ENCODE measurements at regions of chr11 and their contacts with region 1.

Region 1: GRCh38 chr11:9613118-9613829 is 39.8 kb downstream of the WEE1 start:
- DNase-seq: peak; percentile 90
- ATAC-seq: peak; percentile 31
- H3K4me3 ChIP-seq: peak overlapping the region; percentile 48 to 75 (median 66)
- H3K4me3 Mint-ChIP-seq: peak overlapping the region; percentile 98
- H3K27ac ChIP-seq: peak overlapping the region; percentile 98
- H3K27ac Mint-ChIP-seq: peak overlapping the region; percentile 99
- H3K4me1 ChIP-seq: peaks cover 66 to 78% of the 10 kb centered on the region in 2 donors
- H3K4me1 Mint-ChIP-seq: peaks cover 72% of the 10 kb centered on the region
- H3K27me3 ChIP-seq: no peaks in the 10 kb centered on the region
- H3K27me3 Mint-ChIP-seq: no peaks in the 10 kb centered on the region
- CTCF ChIP-seq: peak; percentile 92

Region 2: DNA sequence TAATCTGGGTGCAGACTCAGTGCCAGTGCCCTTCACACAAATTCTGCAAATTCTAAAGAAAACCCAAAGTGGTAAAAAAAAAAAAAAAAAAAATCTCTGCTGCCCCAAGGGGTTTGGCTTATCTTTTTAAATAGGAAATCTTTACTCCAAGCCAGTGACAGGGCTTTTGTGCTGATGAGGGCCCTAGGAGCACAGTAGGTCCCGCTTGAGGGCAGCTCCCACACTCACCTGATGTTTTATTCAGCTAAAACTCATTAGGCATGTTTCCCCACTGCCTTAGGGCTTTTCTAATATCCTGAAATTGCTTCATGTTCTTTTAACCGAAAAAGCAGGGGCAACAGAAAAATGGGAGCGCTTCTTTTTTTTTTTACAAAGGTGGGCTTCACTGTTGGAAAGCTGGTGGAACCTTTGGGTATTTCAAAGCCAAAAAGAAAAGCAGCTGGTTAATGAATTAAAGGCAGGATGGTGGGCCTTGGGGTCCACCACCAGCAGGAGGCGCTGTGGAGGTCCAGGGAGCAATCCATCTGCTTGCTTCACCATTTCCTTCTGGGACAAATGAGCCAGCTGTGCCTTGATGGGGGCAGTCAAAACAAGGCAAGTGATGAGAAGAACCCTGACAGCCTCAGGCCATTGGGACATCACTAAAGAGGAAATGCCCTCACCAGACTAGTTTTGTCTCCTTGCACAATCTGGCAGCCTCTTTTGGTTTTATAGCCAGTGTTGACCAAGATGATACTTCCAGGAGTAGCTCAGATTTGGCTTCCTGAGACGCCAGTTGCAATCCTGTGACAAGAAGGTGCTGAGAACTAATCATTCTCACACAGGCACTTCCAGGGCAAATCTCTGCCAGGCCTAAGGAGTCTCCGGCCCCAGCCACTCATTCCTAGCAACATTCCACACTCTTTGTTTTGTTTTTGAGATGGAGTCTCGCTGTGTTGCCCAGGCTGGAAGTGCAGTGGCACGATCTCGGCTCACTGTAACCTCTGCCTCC is 78.2 kb before region 1 on chr11:
- CTCF ChIA-PET with region 1: interaction called, 149 read pairs
- POLR2A ChIA-PET with region 1: interaction called, 5 read pairs
- intact Hi-C with region 1: loop called (anchors 1 kb)
- DNase-seq: peak; percentile 83
- ATAC-seq: peak; percentile 53
- H3K4me3 ChIP-seq: no peak overlapping the region
- H3K4me3 Mint-ChIP-seq: no peak overlapping the region
- H3K27ac ChIP-seq: no peak overlapping the region
- H3K27ac Mint-ChIP-seq: no peak overlapping the region
- H3K4me1 ChIP-seq: peaks cover 0 to 10% of the 10 kb centered on the region in 2 donors
- H3K4me1 Mint-ChIP-seq: peaks cover 2% of the 10 kb centered on the region
- H3K27me3 ChIP-seq: no peaks in the 10 kb centered on the region
- H3K27me3 Mint-ChIP-seq: no peaks in the 10 kb centered on the region
- CTCF ChIP-seq: peak; percentile 93

Region 3: GRCh38 chr11:9643751-9644150 is 30.5 kb after region 1 on chr11:
- CTCF ChIA-PET with region 1: interaction called, 4 read pairs
- POLR2A ChIA-PET with region 1: interaction called, 4 read pairs
- intact Hi-C with region 1: loop called (anchors 2 kb)
- DNase-seq: no peak
- ATAC-seq: no peak
- H3K4me3 ChIP-seq: no peak overlapping the region
- H3K4me3 Mint-ChIP-seq: no peak overlapping the region
- H3K27ac ChIP-seq: no peak overlapping the region
- H3K27ac Mint-ChIP-seq: peak overlapping the region; percentile 16
- H3K4me1 ChIP-seq: peaks cover 38 to 47% of the 10 kb centered on the region in 2 donors
- H3K4me1 Mint-ChIP-seq: peaks cover 60% of the 10 kb centered on the region
- H3K27me3 ChIP-seq: no peaks in the 10 kb centered on the region
- H3K27me3 Mint-ChIP-seq: no peaks in the 10 kb centered on the region
- CTCF ChIP-seq: no peak

Region 4: GRCh38 chr11:9672288-9672916 is 59.1 kb after region 1 on chr11:
- CTCF ChIA-PET with region 1: interaction called, 43 read pairs
- POLR2A ChIA-PET with region 1: interaction called, 4 read pairs
- intact Hi-C with region 1: no loop called
- DNase-seq: no peak
- ATAC-seq: no peak
- H3K4me3 ChIP-seq: peak overlapping the region in 1 of 5 experiments; percentile 33
- H3K4me3 Mint-ChIP-seq: peak overlapping the region; percentile 81
- H3K27ac ChIP-seq: peak overlapping the region; percentile 44 to 68
- H3K27ac Mint-ChIP-seq: no peak overlapping the region
- H3K4me1 ChIP-seq: peaks cover 72 to 80% of the 10 kb centered on the region in 2 donors
- H3K4me1 Mint-ChIP-seq: peaks cover 61% of the 10 kb centered on the region
- H3K27me3 ChIP-seq: no peaks in the 10 kb centered on the region
- H3K27me3 Mint-ChIP-seq: no peaks in the 10 kb centered on the region
- CTCF ChIP-seq: no peak

Region 5: DNA sequence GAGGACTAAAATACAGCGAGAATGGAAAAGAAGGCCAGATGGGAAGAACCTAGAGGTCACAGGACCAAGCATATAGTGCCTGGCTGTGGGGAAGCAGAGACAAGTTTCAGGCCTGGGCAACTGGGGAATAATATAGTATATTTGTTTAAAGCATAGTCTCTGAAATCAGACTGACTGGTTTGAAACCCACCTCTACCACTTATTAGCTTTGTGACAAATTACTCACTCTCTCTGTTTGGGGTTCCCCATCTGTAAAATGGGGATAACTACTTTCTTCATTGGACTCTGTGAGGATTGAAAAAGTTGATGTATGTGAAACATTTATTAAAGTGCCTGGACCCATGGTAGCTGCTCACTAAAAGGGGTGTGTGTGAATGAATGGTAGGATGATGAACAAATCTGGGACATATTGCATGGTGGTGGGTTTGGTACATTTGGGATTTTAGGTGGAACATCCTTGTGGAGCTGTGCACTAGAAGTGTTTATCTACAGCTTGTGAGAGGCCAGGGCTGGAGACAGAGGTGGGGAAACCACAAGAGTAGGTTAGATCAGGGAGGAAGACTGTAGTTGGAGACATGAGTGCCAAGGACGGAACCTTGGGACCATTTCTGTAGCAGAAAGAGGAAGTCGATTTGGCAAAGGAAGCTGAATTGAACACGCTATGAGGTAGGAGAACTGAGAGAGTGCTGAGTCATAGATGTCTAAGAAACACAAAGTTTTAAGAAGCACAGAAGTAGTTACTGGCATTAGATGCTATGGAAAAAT is 103.2 kb after region 1 on chr11:
- CTCF ChIA-PET with region 1: interaction called, 29 read pairs
- POLR2A ChIA-PET with region 1: interaction called, 6 read pairs
- intact Hi-C with region 1: loop called (anchors 1 kb)
- DNase-seq: peak; percentile 79
- ATAC-seq: peak; percentile 69
- H3K4me3 ChIP-seq: no peak overlapping the region
- H3K4me3 Mint-ChIP-seq: peak overlapping the region; percentile 58
- H3K27ac ChIP-seq: peak overlapping the region; percentile 60 to 66
- H3K27ac Mint-ChIP-seq: peak overlapping the region; percentile 90
- H3K4me1 ChIP-seq: peaks cover 82 to 91% of the 10 kb centered on the region in 2 donors
- H3K4me1 Mint-ChIP-seq: peaks cover 77% of the 10 kb centered on the region
- H3K27me3 ChIP-seq: no peaks in the 10 kb centered on the region
- H3K27me3 Mint-ChIP-seq: no peaks in the 10 kb centered on the region
- CTCF ChIP-seq: no peak

Region 6: DNA sequence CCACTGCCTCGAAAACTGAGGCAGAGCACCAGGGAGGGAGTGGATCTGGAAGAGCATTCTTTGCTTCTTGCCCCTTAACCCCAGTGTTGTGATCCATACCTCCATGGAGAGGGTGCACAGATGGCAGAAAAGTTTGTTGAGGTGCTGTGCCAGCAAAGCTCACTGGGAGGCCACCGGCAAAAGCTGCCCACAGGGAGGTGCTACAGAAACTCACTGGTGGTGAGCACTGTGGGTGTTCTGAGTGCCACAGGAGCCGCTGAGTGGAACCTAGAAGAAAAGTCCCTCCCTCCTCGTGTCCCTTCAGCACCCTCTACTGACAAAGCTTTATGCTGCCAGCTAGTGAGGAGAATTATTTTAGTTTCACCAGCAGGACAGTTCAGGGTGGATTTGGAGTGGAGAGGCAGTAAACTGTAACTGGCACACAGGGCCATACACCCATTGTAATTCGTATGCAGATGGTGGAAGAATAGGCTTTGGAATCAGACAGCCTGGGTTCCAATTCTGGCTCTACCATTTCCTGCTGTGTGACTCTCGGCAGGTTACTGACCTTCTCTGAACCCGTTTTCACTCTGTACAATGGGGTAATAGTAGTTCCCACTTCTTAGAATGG is 135.2 kb after region 1 on chr11:
- CTCF ChIA-PET with region 1: interaction called, 226 read pairs
- POLR2A ChIA-PET with region 1: interaction called, 38 read pairs
- intact Hi-C with region 1: loop called (anchors 1 kb)
- DNase-seq: peak; percentile 88
- ATAC-seq: peak; percentile 77
- H3K4me3 ChIP-seq: peak overlapping the region in 3 of 5 experiments; percentile 4 to 30 (median 22)
- H3K4me3 Mint-ChIP-seq: peak overlapping the region; percentile 66
- H3K27ac ChIP-seq: peak overlapping the region; percentile 40 to 86
- H3K27ac Mint-ChIP-seq: peak overlapping the region; percentile 78
- H3K4me1 ChIP-seq: peaks cover 48 to 49% of the 10 kb centered on the region in 2 donors
- H3K4me1 Mint-ChIP-seq: peaks cover 60% of the 10 kb centered on the region
- H3K27me3 ChIP-seq: no peaks in the 10 kb centered on the region
- H3K27me3 Mint-ChIP-seq: no peaks in the 10 kb centered on the region
- CTCF ChIP-seq: peak; percentile 83

Region 7: GRCh38 chr11:9838961-9839360 is 225.7 kb after region 1 on chr11:
- CTCF ChIA-PET with region 1: no interaction called
- POLR2A ChIA-PET with region 1: no interaction called
- intact Hi-C with region 1: no loop called
- DNase-seq: no peak
- ATAC-seq: no peak
- H3K4me3 ChIP-seq: no peak overlapping the region
- H3K4me3 Mint-ChIP-seq: no peak overlapping the region
- H3K27ac ChIP-seq: no peak overlapping the region
- H3K27ac Mint-ChIP-seq: no peak overlapping the region
- H3K4me1 ChIP-seq: peaks cover 0 to 6% of the 10 kb centered on the region in 2 donors
- H3K4me1 Mint-ChIP-seq: peaks cover 14% of the 10 kb centered on the region
- H3K27me3 ChIP-seq: no peaks in the 10 kb centered on the region
- H3K27me3 Mint-ChIP-seq: no peaks in the 10 kb centered on the region
- CTCF ChIP-seq: no peak

Region 8: GRCh38 chr11:9962722-9963121 is 349.4 kb after region 1 on chr11:
- CTCF ChIA-PET with region 1: no interaction called
- POLR2A ChIA-PET with region 1: no interaction called
- intact Hi-C with region 1: no loop called
- DNase-seq: peak; percentile 34
- ATAC-seq: peak; percentile 64
- H3K4me3 ChIP-seq: peak overlapping the region in 1 of 5 experiments; percentile 20
- H3K4me3 Mint-ChIP-seq: peak overlapping the region; percentile 53
- H3K27ac ChIP-seq: peak overlapping the region in 1 of 2 donors; percentile 71
- H3K27ac Mint-ChIP-seq: peak overlapping the region; percentile 84
- H3K4me1 ChIP-seq: peaks cover 5 to 10% of the 10 kb centered on the region in 2 donors
- H3K4me1 Mint-ChIP-seq: peaks cover 13% of the 10 kb centered on the region
- H3K27me3 ChIP-seq: no peaks in the 10 kb centered on the region
- H3K27me3 Mint-ChIP-seq: no peaks in the 10 kb centered on the region
- CTCF ChIP-seq: no peak

Region 9: DNA sequence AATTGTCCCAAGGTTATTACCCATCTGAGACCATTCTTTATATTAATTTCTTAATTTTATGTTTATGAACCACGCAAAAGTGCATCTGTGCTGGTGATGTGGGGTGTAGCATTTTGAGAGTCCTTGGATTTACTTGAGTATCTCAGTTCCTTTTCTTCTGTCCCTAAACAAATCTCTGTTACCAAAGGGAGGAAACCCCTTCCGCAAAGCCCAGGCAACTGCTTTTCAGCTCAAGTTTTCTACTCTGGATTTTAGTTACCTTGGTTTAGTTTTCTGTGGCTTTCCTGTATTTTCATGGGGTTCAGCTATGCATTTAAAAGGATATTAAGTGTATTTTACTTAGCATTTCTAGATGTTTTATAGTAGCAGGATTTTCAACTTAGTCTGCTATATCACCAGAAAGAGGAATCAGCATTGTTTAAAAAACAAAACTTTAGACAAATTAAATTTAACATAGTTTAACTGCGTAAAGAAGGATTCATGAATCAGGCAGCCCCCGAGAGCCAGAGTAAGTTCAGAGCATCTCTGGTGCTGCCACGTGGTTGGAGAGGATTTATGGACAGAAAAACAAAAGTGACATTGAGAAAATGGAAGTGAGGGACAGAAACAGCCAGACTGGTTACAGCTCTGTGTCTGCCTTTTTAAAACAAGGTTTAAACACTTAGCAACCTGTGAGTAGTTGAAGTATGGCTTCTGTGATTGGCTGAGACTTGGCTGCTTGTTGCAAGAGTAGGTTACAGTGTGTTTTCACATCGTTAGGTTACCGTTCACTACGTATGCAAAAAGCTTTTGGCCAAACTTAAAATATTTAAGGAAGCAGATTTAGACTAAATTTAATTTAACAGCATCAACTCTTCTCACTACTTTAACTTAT is 701.2 kb after region 1 on chr11:
- CTCF ChIA-PET with region 1: interaction called, 4 read pairs
- POLR2A ChIA-PET with region 1: no interaction called
- intact Hi-C with region 1: loop called (anchors 5 kb)
- DNase-seq: peak; percentile 84
- ATAC-seq: peak; percentile 65
- H3K4me3 ChIP-seq: no peak overlapping the region
- H3K4me3 Mint-ChIP-seq: peak overlapping the region; percentile 40
- H3K27ac ChIP-seq: no peak overlapping the region
- H3K27ac Mint-ChIP-seq: no peak overlapping the region
- H3K4me1 ChIP-seq: peaks cover 25 to 26% of the 10 kb centered on the region in 2 donors
- H3K4me1 Mint-ChIP-seq: peaks cover 32% of the 10 kb centered on the region
- H3K27me3 ChIP-seq: no peaks in the 10 kb centered on the region
- H3K27me3 Mint-ChIP-seq: peaks cover 12% of the 10 kb centered on the region
- CTCF ChIP-seq: no peak